ENCODE measurements at regions of chr3 and their contacts with region 1.

Region 1: GRCh38 chr3:45741742-45742141 is 52.5 kb downstream of the SACM1L start:
- DNase-seq: no peak
- H3K4me3 Mint-ChIP-seq: no peak overlapping the region
- H3K27ac Mint-ChIP-seq: no peak overlapping the region
- H3K4me1 Mint-ChIP-seq: peaks cover 25% of the 10 kb centered on the region
- H3K27me3 Mint-ChIP-seq: no peaks in the 10 kb centered on the region

Region 2: GRCh38 chr3:44685128-44685800 is 1056.5 kb before region 1 on chr3:
- intact Hi-C with region 1: no loop called
- DNase-seq: peak; percentile 16
- H3K4me3 Mint-ChIP-seq: peak overlapping the region; percentile 82
- H3K27ac Mint-ChIP-seq: no peak overlapping the region
- H3K4me1 Mint-ChIP-seq: peaks cover 12% of the 10 kb centered on the region
- H3K27me3 Mint-ChIP-seq: peaks cover 8% of the 10 kb centered on the region

Region 3: GRCh38 chr3:45701172-45701867 is 40.4 kb before region 1 on chr3:
- intact Hi-C with region 1: loop called (anchors 5 kb)
- DNase-seq: no peak
- H3K4me3 Mint-ChIP-seq: no peak overlapping the region
- H3K27ac Mint-ChIP-seq: no peak overlapping the region
- H3K4me1 Mint-ChIP-seq: peaks cover 46% of the 10 kb centered on the region
- H3K27me3 Mint-ChIP-seq: no peaks in the 10 kb centered on the region